ENCODE measurements at regions of chr10 and their contacts with region 1.

Region 1: DNA sequence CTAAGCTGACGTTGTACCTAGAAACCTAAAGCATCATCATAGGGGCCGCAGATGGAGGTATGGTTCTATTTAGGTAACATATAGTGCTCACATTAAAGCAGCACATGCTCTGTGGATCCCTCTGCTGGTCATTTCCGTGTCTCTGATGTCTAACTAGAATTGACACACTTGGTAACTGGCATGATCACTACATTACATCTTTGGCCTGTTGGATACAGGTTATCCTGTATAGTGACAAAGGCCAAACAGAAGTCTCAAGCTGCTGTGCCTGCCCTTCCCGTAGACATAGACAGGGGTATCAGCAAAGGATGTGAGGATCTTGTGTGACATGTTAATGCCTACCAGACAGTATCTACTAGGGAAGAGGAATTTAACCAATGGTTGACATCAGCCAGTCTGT is 51.2 kb downstream of the KIF5B start:
- DNase-seq: no peak
- ATAC-seq: peak in 7 of 8 donors; percentile 34 to 64 (median 47)
- H3K4me3 ChIP-seq: no peak overlapping the region
- H3K27ac ChIP-seq: no peak overlapping the region
- H3K4me1 ChIP-seq: peaks cover 0 to 23% (median 8%) of the 10 kb centered on the region in 9 donors
- H3K27me3 ChIP-seq: no peaks in the 10 kb centered on the region
- CTCF ChIP-seq: peak in 8 of 9 donors; percentile 19 to 58 (median 50)

Region 2: DNA sequence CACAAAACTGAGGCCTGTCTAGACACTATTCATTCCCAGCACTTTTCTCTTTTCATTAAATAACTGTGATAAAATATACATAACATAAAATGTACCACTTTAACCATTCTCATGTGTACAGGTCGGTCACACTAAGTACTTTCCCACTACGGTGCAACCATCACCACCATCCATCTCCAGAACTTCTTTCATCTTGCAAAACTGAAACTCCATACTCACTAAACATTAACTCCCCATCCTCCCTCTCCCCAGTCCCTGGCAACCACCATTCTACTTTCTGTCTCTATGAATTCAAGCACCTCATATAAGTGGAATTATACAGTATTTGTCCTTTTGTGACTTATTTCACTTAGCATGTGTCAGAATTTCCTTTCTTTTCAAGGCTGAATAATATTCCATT is 129.4 kb before region 1 on chr10:
- intact Hi-C with region 1: loop called in 1 of 10 experiments (anchors 10 kb)
- DNase-seq: no peak
- ATAC-seq: no peak
- H3K4me3 ChIP-seq: no peak overlapping the region
- H3K27ac ChIP-seq: no peak overlapping the region
- H3K4me1 ChIP-seq: peaks cover 0 to 26% (median 18%) of the 10 kb centered on the region in 9 donors
- H3K27me3 ChIP-seq: no peaks in the 10 kb centered on the region
- CTCF ChIP-seq: no peak

Region 3: DNA sequence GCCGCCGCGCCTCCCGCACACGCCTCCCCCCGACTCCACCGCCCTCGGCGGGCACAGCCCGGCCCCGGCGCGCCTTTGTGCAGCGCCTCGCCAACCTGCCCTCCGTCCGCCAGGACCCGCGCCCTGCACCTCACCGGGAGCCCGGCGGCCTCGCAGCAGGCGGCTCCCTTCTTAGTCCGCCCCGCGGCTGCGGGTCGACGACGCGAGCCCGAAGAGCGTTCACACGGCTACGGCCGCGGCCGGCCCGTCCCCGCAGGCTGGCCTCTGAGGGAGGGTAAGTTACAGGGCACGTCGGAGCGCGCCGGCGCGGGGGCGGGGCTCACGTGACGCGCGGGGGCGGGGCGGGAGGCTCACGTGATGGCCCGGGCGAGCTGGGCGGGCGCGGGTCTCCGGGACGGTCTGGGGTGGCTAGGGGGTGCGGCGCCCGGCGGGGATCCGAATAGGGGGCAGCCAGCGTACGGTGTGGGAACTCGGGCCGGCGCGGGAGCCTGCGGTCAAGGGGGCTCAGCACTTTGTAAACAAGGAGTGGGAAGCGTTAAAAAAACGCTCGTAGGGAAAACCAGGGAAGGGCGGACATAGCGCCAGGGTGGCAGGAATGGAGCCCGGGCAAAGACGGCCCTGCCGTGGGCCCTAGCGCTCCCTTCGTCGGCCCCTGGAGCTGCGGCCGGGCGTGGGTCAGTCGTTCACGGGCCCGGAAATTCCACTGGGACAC is 76.3 kb before region 1 on chr10 and contains the start of gene ARHGAP12:
- intact Hi-C with region 1: loop called in 1 of 10 experiments (anchors 5 kb)
- DNase-seq: peak; percentile 91 to 94
- ATAC-seq: peak; percentile 95 to 98 (median 97)
- H3K4me3 ChIP-seq: peak within 1 kb of the TSS; percentile 53 to 96 (median 89)
- H3K27ac ChIP-seq: peak within 1 kb of the TSS; percentile 90 to 98 (median 97)
- H3K4me1 ChIP-seq: peaks cover 6 to 42% (median 25%) of the 10 kb centered on the region in 9 donors
- H3K27me3 ChIP-seq: no peaks in the 10 kb centered on the region
- CTCF ChIP-seq: no peak
- total RNA-seq, gene ARHGAP12: 16.7 to 25.6 (median 21.0) TPM

Region 4: DNA sequence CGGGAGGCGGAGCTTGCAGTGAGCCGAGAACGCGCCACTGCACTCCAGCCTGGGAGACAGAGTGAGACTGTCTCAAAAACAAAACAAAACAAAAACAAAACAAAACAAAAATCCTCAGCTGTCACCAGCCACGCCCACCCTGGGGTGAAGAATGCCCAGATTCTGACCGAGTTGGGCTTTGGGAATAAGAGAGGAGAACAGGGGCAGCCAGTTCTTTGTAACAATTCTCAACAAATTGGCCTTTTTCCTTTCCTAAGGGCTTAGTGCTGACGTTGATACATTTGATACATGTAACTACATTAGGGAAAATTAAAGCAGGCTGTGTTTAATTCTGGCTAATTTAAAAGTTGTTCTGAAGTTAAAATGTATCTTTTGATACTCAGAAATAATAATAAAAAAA is 220.9 kb after region 1 on chr10:
- intact Hi-C with region 1: no loop called
- DNase-seq: no peak
- ATAC-seq: no peak
- H3K4me3 ChIP-seq: no peak overlapping the region
- H3K27ac ChIP-seq: no peak overlapping the region
- H3K4me1 ChIP-seq: no peaks in the 10 kb centered on the region
- H3K27me3 ChIP-seq: no peaks in the 10 kb centered on the region
- CTCF ChIP-seq: no peak

Measured in heart right ventricle (tissue), 16 donors.